ENCODE measurements at regions of chr1 and their contacts with region 1.

Region 1: DNA sequence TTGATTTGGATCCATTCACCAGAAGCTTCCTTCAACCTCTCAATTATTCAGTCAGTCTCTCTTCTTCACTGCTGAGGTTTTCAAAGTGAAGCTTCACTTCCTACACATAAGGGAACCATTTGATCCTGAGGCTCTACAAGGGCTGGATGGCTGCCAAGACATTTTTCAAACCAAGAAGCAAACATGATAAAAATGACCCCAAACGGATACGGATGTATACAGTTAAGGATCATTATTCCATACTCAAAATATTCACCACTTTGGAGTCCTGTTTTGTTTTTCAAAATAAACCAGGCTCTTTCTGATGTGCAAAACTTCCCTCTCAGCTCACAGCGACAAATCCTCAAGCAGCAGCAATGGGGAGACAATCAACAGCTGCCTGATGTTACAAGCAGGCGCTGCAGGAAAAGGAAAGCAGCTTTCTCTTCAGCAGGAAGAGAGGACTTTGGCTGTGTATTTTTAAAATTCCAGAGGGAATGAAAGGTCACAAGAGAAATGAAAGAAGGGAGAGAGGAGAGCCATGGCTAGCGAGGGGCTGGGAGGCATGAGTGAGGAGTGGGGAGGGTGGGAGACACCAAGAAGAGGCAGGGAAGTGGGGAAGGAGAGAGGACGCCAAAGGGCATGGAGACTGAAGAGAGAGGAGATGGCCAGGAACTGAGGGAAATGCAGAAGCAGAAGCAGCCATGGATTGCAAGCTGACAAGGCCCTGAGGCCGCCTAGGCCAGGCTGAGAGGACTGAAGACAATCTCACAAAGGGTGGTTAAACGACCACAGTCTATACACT is 145.4 kb downstream of the SLC45A1 start:
- DNase-seq: peak; percentile 89
- ATAC-seq: peak; percentile 70
- H3K4me3 ChIP-seq: no peak overlapping the region
- H3K27ac ChIP-seq: peak overlapping the region; percentile 96
- H3K4me1 ChIP-seq: peaks cover 37% of the 10 kb centered on the region
- H3K27me3 ChIP-seq: no peaks in the 10 kb centered on the region
- CTCF ChIP-seq: no peak
- POLR2A ChIP-seq: no peak
- RAD21 ChIP-seq: no peak

Region 2: DNA sequence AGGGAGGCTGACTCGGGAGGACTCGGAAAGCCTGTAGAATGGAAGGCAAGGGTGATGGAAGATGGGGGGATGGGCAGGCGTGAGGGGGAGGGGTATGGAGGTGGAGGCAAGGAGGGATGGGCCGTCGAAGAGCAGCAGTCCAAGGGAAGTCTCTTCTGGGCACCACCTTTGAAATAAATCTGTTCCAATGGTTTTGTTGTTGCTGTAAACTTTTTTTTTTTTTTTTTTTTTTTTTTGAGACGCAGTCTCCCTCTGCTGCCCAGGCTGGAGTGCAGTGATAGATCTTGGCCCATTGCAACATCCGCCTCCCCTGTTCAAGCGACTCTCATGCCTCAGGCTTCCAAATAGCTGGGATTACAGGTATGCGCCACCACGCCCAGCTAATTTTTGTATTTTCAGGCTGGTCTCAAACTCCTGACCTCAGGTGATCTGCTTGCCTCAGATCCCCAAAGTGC is 224.5 kb before region 1 on chr1:
- CTCF ChIA-PET with region 1: no interaction called
- POLR2A ChIA-PET with region 1: no interaction called
- dilution Hi-C with region 1: no loop called
- in situ Hi-C with region 1: no loop called
- intact Hi-C with region 1: no loop called
- DNase-seq: peak; percentile 58
- ATAC-seq: peak; percentile 19
- H3K4me3 ChIP-seq: no peak overlapping the region
- H3K27ac ChIP-seq: peak overlapping the region; percentile 76
- H3K4me1 ChIP-seq: peaks cover 14% of the 10 kb centered on the region
- H3K27me3 ChIP-seq: no peaks in the 10 kb centered on the region
- CTCF ChIP-seq: peak; percentile 46
- POLR2A ChIP-seq: no peak
- RAD21 ChIP-seq: peak; percentile 46

Region 3: DNA sequence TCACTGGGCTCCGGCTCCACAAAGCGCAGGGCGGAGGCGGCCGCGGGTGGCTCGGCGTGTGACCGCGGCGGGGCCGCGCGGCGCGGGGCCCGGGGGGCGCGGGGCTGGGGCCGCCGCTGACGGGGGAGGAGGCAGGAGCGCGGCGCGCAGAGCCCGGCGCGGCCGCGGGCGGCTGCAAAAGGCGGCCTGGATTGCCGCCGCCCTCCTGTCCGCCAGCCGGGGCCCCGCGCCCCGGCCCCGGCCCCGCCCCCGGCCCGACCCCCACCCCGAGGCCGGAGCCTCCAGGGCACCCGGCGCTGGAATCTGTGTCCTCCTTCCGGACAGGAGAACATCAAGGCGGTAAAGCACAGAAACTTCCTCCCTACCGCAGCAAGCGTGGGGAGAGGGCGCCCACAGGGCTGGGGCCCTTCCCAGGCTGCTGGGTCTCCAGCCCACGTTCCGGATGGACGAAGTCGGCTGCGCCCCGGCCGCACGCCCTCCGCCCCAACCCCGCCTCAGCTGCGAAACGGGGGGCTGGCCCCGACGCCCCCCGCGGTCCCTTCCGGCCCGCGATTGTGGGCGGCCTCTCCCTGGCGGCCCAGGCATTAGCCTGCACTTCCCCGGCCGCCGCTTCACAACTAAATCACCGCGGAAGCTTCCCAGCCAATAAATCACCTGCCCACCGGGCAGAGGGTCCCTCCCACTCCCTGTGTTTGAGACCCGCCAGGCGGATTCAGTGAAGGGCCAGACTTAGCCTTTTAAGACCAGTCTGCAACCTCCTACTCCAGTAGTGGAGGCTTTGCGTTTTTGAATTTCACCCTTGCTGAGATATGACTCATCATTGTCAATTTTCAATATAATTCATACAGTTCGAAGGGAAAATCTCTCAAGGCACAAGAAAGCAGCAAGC is 39.4 kb before region 1 on chr1:
- CTCF ChIA-PET with region 1: no interaction called
- POLR2A ChIA-PET with region 1: no interaction called
- dilution Hi-C with region 1: no loop called
- in situ Hi-C with region 1: no loop called
- intact Hi-C with region 1: loop called (anchors 2 kb)
- DNase-seq: peak; percentile 65
- ATAC-seq: peak; percentile 66
- H3K4me3 ChIP-seq: peak overlapping the region; percentile 73
- H3K27ac ChIP-seq: peak overlapping the region; percentile 99
- H3K4me1 ChIP-seq: peaks cover 15% of the 10 kb centered on the region
- H3K27me3 ChIP-seq: no peaks in the 10 kb centered on the region
- CTCF ChIP-seq: no peak
- POLR2A ChIP-seq: peak; percentile 56; the same call in 1 of the 2 replicates
- RAD21 ChIP-seq: no peak; the same call in 1 of the 2 replicates

Region 4: GRCh38 chr1:8482979-8483391 is 19.6 kb after region 1 on chr1:
- CTCF ChIA-PET with region 1: interaction called, 4 read pairs
- POLR2A ChIA-PET with region 1: interaction called, 14 read pairs
- dilution Hi-C with region 1: no loop called
- in situ Hi-C with region 1: no loop called
- intact Hi-C with region 1: no loop called
- DNase-seq: peak; percentile 63
- ATAC-seq: peak; percentile 65
- H3K4me3 ChIP-seq: no peak overlapping the region
- H3K27ac ChIP-seq: no peak overlapping the region
- H3K4me1 ChIP-seq: peaks cover 11% of the 10 kb centered on the region
- H3K27me3 ChIP-seq: no peaks in the 10 kb centered on the region
- CTCF ChIP-seq: no peak
- POLR2A ChIP-seq: no peak
- RAD21 ChIP-seq: no peak

Region 5: DNA sequence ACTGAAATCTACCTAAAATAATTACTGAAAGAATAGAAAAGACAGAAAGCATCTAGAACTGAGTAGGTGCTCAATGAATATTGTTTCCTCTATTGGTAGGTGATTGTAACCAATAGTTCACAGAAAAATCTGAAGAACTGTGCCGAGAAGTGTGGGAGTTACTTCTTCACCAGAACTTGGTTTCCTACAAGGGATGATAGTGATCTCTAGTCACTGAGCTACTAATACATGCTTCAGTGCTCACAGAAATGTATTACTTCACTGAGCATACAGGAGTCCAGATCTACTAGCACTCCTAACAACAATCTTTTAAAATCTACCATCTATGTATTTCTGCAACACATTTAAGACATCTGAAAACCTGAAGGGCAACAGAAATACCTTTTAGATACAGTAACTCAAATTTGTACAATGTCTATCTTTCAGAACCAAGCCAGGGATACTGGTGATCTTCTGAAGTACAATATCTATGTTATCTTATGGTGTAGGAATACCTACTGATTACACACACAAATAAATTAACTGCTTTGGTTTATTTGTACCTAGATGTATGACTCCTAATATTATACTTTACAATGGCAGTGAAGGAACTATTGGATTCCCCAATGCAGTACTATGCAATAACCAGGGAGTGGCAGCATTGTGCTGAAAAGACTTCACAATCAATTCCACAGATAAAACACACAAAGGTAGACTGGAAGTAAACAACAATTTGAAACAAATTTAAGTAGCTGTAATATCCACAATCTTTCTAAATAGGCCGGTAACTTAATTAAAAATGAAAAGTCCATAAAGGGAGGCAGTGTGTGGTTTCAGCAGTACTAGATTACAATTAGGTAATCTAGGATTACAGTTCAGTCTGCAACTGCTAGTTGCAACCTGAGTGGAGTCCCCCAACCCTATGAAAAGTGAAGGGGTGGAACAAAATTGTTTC is 97.5 kb after region 1 on chr1:
- CTCF ChIA-PET with region 1: interaction called, 3 read pairs
- POLR2A ChIA-PET with region 1: no interaction called
- dilution Hi-C with region 1: no loop called
- in situ Hi-C with region 1: no loop called
- intact Hi-C with region 1: loop called (anchors 5 kb)
- DNase-seq: peak; percentile 60
- ATAC-seq: peak; percentile 85
- H3K4me3 ChIP-seq: no peak overlapping the region
- H3K27ac ChIP-seq: no peak overlapping the region
- H3K4me1 ChIP-seq: peaks cover 7% of the 10 kb centered on the region
- H3K27me3 ChIP-seq: no peaks in the 10 kb centered on the region
- CTCF ChIP-seq: peak; percentile 84
- POLR2A ChIP-seq: no peak
- RAD21 ChIP-seq: peak; percentile 89

Region 6: DNA sequence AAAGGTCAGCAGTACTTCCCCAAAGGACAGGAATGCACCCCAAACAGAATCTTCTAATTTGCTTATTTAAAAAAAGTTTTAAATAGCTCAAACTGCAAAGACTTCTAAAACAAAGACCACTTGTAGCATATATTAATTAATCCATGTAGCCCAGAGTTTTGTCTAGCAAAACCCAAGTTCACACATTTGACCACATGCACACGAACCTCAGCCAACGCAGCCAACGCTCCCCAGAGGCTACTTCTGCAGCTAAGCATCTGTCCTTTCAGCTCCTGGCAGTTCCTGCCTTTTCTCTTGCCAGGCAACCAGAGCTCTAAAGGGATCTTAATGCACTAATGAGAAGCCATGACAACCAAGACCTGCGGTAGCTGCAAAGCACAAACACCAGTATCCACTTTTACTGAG is 264.5 kb after region 1 on chr1:
- CTCF ChIA-PET with region 1: interaction called, 3 read pairs
- POLR2A ChIA-PET with region 1: no interaction called
- dilution Hi-C with region 1: no loop called
- in situ Hi-C with region 1: no loop called
- intact Hi-C with region 1: loop called (anchors 2 kb)
- DNase-seq: no peak
- ATAC-seq: no peak
- H3K4me3 ChIP-seq: no peak overlapping the region
- H3K27ac ChIP-seq: no peak overlapping the region
- H3K4me1 ChIP-seq: peaks cover 2% of the 10 kb centered on the region
- H3K27me3 ChIP-seq: no peaks in the 10 kb centered on the region
- CTCF ChIP-seq: no peak
- POLR2A ChIP-seq: no peak
- RAD21 ChIP-seq: no peak

Region 7: DNA sequence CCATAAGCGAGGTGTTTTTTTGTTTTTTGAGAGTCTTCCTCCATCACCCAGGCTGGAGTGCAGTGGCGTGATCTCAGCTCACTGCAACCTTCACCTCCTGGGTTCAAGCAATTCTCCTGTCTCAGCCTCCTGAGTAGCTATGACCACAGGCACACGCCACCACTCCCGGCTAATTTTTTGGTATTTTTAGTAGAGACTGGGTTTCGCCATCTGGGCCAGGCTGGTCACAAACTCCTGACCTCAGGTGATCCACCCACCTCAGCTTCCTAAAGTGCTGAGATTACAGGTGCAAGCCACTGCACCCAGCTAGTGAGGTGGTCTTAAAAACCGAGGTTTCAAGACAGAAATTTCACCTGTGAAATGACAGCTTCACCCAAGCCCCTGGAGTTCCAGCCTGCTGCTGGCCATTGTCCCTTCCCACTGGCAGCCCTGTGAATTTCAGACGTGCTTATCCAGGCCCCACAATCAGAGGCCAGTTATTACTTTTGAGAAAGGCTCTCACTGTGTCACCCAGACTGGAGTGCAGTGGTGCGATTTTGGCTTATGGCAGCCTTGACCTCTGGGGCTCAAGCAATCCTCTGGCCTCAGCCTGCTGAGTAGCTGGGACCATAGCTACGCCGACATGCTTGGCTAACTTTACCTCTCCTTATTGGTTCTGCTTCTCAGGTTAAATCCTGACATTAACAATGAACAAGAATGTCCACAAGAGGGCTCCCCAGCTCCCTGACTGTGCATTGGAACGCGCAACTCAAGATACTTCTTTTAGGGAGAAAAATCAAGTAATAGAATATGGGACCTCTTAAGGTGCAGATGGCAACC is 395.8 kb after region 1 on chr1:
- CTCF ChIA-PET with region 1: no interaction called
- POLR2A ChIA-PET with region 1: no interaction called
- dilution Hi-C with region 1: no loop called
- in situ Hi-C with region 1: no loop called
- intact Hi-C with region 1: loop called (anchors 10 kb)
- DNase-seq: peak; percentile 67
- ATAC-seq: peak; percentile 38
- H3K4me3 ChIP-seq: no peak overlapping the region
- H3K27ac ChIP-seq: no peak overlapping the region
- H3K4me1 ChIP-seq: peaks cover 8% of the 10 kb centered on the region
- H3K27me3 ChIP-seq: no peaks in the 10 kb centered on the region
- CTCF ChIP-seq: peak; percentile 60
- POLR2A ChIP-seq: no peak
- RAD21 ChIP-seq: peak; percentile 56

Measured in IMR-90 (cell line).